Left colon (tissue), 2 donors: ENCODE measurements at regions of chr11 and their contacts with region 1.

Region 1: DNA sequence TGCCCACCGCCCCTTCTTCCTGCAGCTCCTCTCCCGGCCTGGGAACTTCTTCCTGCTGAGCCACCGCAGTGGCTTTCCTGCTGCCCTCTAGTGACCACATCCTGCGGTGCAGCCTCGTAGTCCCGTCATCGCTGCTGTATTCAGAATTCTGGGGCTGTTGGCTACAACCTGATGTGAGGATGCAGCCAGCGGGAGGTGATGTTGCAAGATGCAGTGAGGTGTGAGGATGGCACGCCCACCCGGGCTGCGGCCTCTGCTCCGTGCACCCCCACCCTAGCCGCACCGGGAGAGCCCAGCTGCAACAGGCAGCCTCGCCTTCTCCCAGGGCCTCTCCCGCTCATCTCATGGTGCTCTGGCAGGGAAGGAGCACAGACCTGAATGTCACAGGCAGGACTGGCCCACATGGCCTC is 10.1 kb downstream of the CHST1 start:
- DNase-seq: peak in 1 of 2 donors; percentile 72
- ATAC-seq: peak; percentile 73

Region 2: GRCh38 chr11:45371251-45372115 is 283.9 kb before region 1 on chr11:
- intact Hi-C with region 1: loop called (anchors 10 kb)
- DNase-seq: peak in 1 of 2 donors; percentile 65
- ATAC-seq: peak; percentile 57

Region 3: GRCh38 chr11:45704635-45705034 is 49.3 kb after region 1 on chr11:
- intact Hi-C with region 1: no loop called
- DNase-seq: no peak
- ATAC-seq: no peak